ENCODE measurements at regions of chr22 and their contacts with region 1.

Region 1: DNA sequence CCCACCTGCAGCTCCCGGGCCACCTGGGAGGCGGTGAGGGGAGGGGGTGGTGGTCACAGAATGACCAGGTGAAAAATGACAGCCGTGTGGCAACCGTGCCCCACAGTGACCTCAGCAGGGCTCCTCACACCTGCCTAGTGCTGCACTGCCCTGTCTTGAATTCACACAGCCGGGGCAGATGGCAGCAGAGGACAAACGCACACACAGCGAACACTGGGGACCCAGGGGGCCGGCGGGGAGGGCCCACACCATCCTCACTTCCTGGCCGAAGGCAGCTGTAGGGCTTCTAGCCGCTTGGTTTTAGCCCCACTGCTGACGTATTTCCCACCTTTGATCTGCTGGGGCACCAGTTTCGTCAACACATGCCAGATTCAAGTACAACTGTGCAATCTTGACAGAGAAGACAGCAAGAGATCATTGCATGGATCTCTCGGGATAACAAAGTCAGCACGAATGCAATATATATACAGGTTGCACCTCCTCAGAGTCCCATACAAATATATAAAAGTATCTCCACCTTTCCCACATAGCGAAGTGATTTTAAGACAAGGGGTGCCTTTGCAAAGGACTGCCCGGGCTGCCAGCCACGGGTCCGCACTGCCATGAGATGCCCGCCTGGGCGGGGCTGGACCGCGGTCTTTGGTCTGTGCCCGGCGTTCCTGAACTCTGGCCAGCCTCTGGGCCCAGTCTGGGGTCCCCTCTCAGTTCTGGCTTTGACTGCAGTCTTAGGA is 26.9 kb downstream of the TRMU start:
- DNase-seq: peak in 1 of 5 donors; percentile 48
- ATAC-seq: no peak
- H3K4me3 ChIP-seq: no peak overlapping the region
- H3K27ac ChIP-seq: no peak overlapping the region
- H3K4me1 ChIP-seq: peaks cover 0 to 4% (median 0%) of the 10 kb centered on the region in 12 donors
- H3K27me3 ChIP-seq: peaks cover 0 to 10% (median 0%) of the 10 kb centered on the region in 9 donors
- CTCF ChIP-seq: no peak
- POLR2A ChIP-seq: no peak

Region 2: GRCh38 chr22:46267431-46268279 is 94.7 kb before region 1 on chr22 and contains the start of gene TTC38:
- intact Hi-C with region 1: no loop called
- DNase-seq: peak; percentile 96 to 98 (median 96)
- ATAC-seq: peak; percentile 93 to 98 (median 98)
- H3K4me3 ChIP-seq: peak within 1 kb of the TSS; percentile 57 to 93 (median 78)
- H3K27ac ChIP-seq: peak within 1 kb of the TSS; percentile 60 to 96 (median 90)
- H3K4me1 ChIP-seq: peaks cover 0 to 38% (median 23%) of the 10 kb centered on the region in 12 donors
- H3K27me3 ChIP-seq: peaks cover 0 to 2% (median 0%) of the 10 kb centered on the region in 9 donors
- CTCF ChIP-seq: no peak
- POLR2A ChIP-seq: peak in 1 of 2 donors; percentile 72
- total RNA-seq, gene TTC38: 21.3 to 72.4 (median 25.3) TPM

Region 3: DNA sequence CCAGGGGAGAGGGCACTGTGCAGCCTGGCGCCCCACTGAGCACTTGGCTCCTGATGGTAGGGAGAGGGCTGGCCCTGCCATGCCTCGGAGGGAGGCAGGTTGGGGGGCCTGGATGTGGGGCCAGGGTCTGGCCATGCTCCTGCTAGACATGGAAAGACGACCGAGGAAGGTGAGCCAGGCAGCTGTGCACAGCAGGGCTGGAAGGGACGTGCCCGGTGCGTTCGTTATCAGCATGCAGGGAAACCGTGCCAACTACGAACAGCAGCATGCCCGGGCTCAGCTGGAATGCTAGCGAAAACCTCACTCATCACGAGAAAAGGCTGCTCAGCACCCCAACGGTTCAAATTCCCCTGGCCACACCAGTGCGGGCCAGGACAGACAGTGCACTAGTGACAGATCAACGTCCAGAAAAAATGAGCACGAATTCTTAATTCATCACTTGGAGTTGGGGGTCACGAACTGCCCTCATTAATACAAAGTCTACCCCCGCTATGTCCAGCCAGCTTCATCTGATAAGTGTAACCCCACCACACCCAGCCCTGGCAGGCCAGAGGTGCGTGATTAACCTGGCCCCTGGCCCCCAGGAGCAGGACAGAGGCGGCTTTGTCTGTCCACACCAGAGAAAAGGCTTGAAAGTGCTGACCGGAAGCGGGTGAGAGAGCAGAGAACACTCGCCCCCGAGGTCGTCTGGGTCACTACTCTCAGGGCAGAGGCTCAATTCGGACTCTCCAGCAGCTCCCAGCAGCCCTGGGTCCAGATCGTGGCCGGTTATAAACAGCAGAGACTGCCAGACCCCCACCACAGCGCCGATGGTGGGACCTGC is 90.8 kb after region 1 on chr22:
- intact Hi-C with region 1: no loop called
- DNase-seq: peak in 1 of 5 donors; percentile 42
- ATAC-seq: peak; percentile 31 to 66 (median 38)
- H3K4me3 ChIP-seq: no peak overlapping the region
- H3K27ac ChIP-seq: no peak overlapping the region
- H3K4me1 ChIP-seq: peaks cover 0 to 27% (median 6%) of the 10 kb centered on the region in 12 donors
- H3K27me3 ChIP-seq: peaks cover 0 to 4% (median 0%) of the 10 kb centered on the region in 9 donors
- CTCF ChIP-seq: no peak
- POLR2A ChIP-seq: no peak

Region 4: DNA sequence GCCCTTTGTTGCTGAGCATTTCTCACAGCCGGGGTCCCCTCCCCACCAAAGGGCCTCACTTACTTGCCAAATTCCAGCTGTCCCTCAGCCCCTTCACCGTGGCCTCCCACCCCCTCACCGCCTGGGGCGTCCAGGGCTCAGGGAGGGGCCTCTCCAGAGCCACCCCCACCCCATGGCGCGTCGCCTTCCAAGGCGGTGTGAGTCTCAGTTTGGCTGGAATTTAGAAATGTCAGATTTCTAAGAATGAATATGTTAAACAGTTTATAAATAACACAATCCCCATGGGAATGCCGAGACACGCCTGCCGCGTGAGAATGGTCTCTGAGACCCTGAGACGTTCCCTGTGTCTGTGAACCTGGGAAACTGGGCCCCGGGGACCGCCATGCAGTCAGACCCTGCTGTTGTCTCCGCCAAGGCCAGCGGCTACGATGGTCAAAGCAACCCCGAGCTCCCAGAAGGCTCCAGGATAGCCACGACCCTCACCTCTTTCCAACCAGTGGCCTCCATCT is 146.2 kb after region 1 on chr22:
- intact Hi-C with region 1: no loop called
- DNase-seq: no peak
- ATAC-seq: no peak
- H3K4me3 ChIP-seq: no peak overlapping the region
- H3K27ac ChIP-seq: no peak overlapping the region
- H3K4me1 ChIP-seq: peaks cover 0 to 5% (median 0%) of the 10 kb centered on the region in 12 donors
- H3K27me3 ChIP-seq: peaks cover 0 to 4% (median 0%) of the 10 kb centered on the region in 9 donors
- CTCF ChIP-seq: no peak
- POLR2A ChIP-seq: no peak

Region 5: DNA sequence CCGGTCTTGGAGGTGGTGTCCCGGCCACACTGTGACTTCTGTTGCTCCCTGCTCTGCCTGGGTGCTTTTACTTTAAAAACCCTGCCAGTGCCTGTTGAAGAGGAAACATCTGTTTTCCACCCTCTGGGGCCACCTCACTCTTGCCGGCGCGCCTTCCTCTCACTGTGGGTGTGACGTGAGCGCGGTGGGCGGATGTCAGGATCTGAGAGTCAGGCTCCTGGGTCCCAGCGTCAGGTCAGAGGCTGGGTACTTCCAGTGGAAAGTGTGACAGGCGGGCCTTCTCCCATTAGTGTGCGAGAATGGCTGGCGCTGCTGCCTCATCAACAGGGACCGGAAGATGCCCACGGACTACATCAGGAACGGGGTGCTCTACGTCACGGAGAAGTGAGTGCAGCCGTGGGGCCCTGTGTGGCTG is 312.0 kb after region 1 on chr22:
- intact Hi-C with region 1: loop called in 1 of 10 experiments (anchors 5 kb)
- DNase-seq: peak; percentile 73 to 87 (median 84)
- ATAC-seq: peak; percentile 13 to 84 (median 34)
- H3K4me3 ChIP-seq: peak overlapping the region in 10 of 12 donors; percentile 22 to 61 (median 44)
- H3K27ac ChIP-seq: peak overlapping the region; percentile 15 to 86 (median 69)
- H3K4me1 ChIP-seq: peaks cover 0 to 47% (median 16%) of the 10 kb centered on the region in 12 donors
- H3K27me3 ChIP-seq: no peaks in the 10 kb centered on the region
- CTCF ChIP-seq: no peak
- POLR2A ChIP-seq: no peak